ENCODE measurements at regions of chr2 and their contacts with region 1.

Region 1: GRCh38 chr2:38750891-38751595 is at the start of gene SRSF7:
- DNase-seq: peak; percentile 98
- H3K4me3 Mint-ChIP-seq: peak within 1 kb of the TSS; percentile 97
- H3K27ac Mint-ChIP-seq: peak within 1 kb of the TSS; percentile 98
- H3K4me1 Mint-ChIP-seq: peaks cover 55% of the 10 kb centered on the region
- H3K27me3 Mint-ChIP-seq: no peaks in the 10 kb centered on the region
- total RNA-seq, gene SRSF7: 243 to 249 TPM

Region 2: GRCh38 chr2:38076606-38077430 is 674.2 kb before region 1 on chr2:
- CTCF ChIA-PET with region 1: no interaction called
- POLR2A ChIA-PET with region 1: interaction called, 10 read pairs
- DNase-seq: peak; percentile 83
- H3K4me3 Mint-ChIP-seq: peak overlapping the region; percentile 72
- H3K27ac Mint-ChIP-seq: peak overlapping the region; percentile 79
- H3K4me1 Mint-ChIP-seq: peaks cover 45% of the 10 kb centered on the region
- H3K27me3 Mint-ChIP-seq: peaks cover 57% of the 10 kb centered on the region

Region 3: DNA sequence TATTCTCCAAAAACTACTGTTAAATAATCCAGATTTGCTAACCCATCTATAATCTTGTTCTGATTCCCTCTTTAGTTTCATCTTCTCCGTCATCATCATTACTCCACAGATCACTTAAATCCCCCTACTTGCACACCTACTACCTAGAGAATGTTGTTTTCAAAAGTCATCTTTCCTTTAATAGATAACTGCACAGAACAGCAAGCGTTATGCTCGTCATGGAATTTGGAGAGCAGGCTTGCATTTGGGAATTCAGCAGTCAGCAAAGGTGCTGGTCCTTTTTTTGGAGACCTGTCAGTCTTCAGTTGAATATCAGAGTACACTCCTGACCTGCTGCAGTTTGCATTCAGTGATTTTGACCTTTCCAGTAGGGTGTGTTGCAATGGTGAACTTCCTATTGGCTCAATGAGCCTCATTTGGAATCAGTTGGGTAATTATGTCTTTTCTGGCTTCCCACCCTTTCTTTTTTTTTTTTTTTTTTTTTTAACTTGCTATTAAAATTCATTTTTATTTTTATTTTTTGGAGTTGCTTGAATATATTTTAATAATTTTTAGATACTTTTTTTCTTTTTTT is 258.9 kb before region 1 on chr2:
- CTCF ChIA-PET with region 1: no interaction called
- POLR2A ChIA-PET with region 1: no interaction called
- DNase-seq: no peak
- H3K4me3 Mint-ChIP-seq: no peak overlapping the region
- H3K27ac Mint-ChIP-seq: no peak overlapping the region
- H3K4me1 Mint-ChIP-seq: no peaks in the 10 kb centered on the region
- H3K27me3 Mint-ChIP-seq: peaks cover 1% of the 10 kb centered on the region

Region 4: GRCh38 chr2:38572167-38572566 is 178.9 kb before region 1 on chr2:
- CTCF ChIA-PET with region 1: no interaction called
- POLR2A ChIA-PET with region 1: interaction called, 19 read pairs
- DNase-seq: no peak
- H3K4me3 Mint-ChIP-seq: no peak overlapping the region
- H3K27ac Mint-ChIP-seq: no peak overlapping the region
- H3K4me1 Mint-ChIP-seq: peaks cover 48% of the 10 kb centered on the region
- H3K27me3 Mint-ChIP-seq: no peaks in the 10 kb centered on the region

Region 5: GRCh38 chr2:38653715-38654527 is 97.1 kb before region 1 on chr2:
- CTCF ChIA-PET with region 1: no interaction called
- POLR2A ChIA-PET with region 1: interaction called, 16 read pairs
- DNase-seq: peak; percentile 74
- H3K4me3 Mint-ChIP-seq: peak overlapping the region; percentile 64
- H3K27ac Mint-ChIP-seq: peak overlapping the region; percentile 95
- H3K4me1 Mint-ChIP-seq: peaks cover 83% of the 10 kb centered on the region
- H3K27me3 Mint-ChIP-seq: no peaks in the 10 kb centered on the region

Region 6: DNA sequence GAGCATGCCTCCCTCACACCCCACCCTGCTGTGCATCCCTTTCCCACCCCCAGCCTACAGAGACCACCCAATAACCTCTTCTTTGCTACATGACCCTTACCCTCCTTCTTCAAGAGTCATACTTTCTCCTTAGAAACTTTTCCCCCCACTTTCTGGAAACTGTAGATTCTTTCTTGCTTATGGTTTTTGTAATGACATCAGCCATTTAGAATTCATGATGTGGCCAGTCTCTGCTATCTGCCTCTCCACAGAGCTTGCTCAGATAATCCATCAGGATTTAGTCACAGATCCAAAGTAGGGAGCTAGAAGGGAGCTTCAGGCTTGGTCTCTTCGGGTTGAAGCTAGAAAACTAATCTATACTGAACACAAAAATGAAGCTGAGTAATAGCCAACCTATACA is 48.6 kb before region 1 on chr2:
- CTCF ChIA-PET with region 1: no interaction called
- POLR2A ChIA-PET with region 1: interaction called, 13 read pairs
- DNase-seq: no peak
- H3K4me3 Mint-ChIP-seq: peak overlapping the region; percentile 6
- H3K27ac Mint-ChIP-seq: peak overlapping the region; percentile 52
- H3K4me1 Mint-ChIP-seq: peaks cover 69% of the 10 kb centered on the region
- H3K27me3 Mint-ChIP-seq: no peaks in the 10 kb centered on the region

Region 7: GRCh38 chr2:38771632-38772031 is 20.6 kb after region 1 on chr2:
- CTCF ChIA-PET with region 1: interaction called, 4 read pairs
- POLR2A ChIA-PET with region 1: interaction called, 34 read pairs
- DNase-seq: no peak
- H3K4me3 Mint-ChIP-seq: no peak overlapping the region
- H3K27ac Mint-ChIP-seq: no peak overlapping the region
- H3K4me1 Mint-ChIP-seq: peaks cover 5% of the 10 kb centered on the region
- H3K27me3 Mint-ChIP-seq: peaks cover 14% of the 10 kb centered on the region

Region 8: DNA sequence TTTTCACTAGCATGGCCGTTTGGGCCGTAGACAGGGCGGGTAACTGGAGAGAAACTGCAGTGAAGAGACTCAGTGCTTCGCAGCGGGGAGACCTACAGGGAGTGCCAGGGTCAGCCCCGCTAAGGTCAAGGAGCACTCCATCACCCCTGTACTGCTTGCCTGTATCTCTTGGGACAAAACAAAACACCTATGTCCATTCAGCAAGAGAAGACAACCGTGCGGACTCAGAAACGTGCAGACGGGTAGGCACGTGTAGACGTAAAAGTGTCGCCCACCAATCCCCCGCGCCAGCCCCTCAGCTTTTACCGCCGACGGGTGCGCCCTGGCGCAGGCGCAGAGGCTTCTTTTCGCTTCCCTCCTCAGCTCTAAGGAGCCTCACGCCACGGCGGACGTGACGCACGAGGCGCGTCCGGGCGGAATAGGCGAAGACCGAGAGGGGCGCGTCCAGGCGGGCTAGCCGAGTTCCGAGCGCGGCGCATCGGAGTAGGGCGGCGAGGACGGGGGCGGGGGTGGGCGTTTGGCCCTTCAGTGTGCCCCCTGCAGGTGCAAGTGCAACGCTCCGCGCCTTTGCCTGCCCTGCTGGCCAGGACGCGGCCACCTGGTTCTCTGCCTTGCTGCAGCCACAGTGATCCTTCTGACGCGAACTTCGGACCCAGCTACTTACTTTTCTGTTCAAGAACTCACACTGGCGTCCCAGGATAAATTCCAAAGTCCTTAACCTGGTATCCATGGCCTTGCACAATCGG is 373.1 kb after region 1 on chr2:
- CTCF ChIA-PET with region 1: no interaction called
- POLR2A ChIA-PET with region 1: interaction called, 33 read pairs
- DNase-seq: peak; percentile 97
- H3K4me3 Mint-ChIP-seq: peak overlapping the region; percentile 89
- H3K27ac Mint-ChIP-seq: peak overlapping the region; percentile 92
- H3K4me1 Mint-ChIP-seq: peaks cover 63% of the 10 kb centered on the region
- H3K27me3 Mint-ChIP-seq: no peaks in the 10 kb centered on the region